ENCODE measurements at regions of chr19 and their contacts with region 1.

Region 1: GRCh38 chr19:4065430-4066175 is 1.1 kb downstream of the ZBTB7A start:
- DNase-seq: peak; percentile 93 to 99 (median 98)
- ATAC-seq: peak; percentile 60 to 76
- H3K4me3 Mint-ChIP-seq: peak overlapping the region; percentile 50 to 88 (median 67)
- H3K27ac Mint-ChIP-seq: peak overlapping the region in 7 of 10 donors; percentile 32 to 81 (median 65)
- H3K4me1 Mint-ChIP-seq: peaks cover 7 to 53% (median 42%) of the 10 kb centered on the region in 4 donors
- H3K27me3 Mint-ChIP-seq: no peaks in the 10 kb centered on the region

Region 2: DNA sequence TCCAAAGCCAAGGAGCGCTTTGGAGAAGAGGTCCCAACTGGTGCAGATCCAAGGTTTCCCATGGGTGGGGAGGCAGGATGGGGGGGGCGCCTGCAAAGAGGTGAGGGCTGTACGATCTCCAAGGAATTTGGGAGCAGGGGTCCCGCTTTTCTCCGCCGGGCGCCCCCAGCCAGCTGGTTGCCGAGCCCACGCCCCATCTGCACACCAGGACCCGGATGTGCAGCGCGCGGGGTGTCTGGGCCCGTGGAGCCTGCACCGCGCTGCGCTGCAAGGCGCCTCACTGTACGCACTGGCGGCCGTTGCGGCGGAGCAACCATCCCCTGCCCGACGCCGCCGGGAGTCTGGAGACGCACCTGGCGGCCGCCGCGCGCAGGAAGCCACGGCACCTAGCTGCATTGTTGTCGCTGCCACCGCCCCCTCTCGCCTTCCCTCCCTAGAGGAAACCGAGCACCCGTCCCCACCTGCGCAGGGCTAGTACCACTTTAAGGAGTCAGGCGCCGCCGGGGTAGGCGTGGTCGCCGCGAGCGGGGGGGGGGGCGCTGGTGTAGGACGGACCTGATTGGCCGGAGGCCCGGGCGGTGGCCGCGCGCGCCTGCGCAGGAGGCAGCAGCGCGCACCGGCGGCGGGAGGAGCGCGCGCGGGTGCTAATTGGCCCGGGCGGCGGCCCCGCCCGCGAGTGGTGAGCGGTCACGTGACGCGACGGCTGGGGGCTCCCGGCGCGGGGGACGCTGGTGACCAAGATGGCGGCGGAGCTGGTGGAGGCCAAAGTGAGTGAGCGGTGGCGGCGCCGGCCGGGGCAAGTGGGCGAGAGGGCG is 58.4 kb before region 1 on chr19 and contains the start of gene PIAS4:
- POLR2A ChIA-PET with region 1: interaction called, 26 read pairs
- DNase-seq: peak; percentile 88 to 99 (median 94)
- ATAC-seq: peak; percentile 90 to 91
- H3K4me3 Mint-ChIP-seq: peak within 1 kb of the TSS; percentile 79 to 93 (median 87)
- H3K27ac Mint-ChIP-seq: peak within 1 kb of the TSS; percentile 71 to 91 (median 85)
- H3K4me1 Mint-ChIP-seq: peaks cover 11 to 39% (median 29%) of the 10 kb centered on the region in 4 donors
- H3K27me3 Mint-ChIP-seq: no peaks in the 10 kb centered on the region
- polyA plus RNA-seq, gene PIAS4: 3.2 to 4.9 (median 4.5) TPM

Region 3: GRCh38 chr19:4019578-4019977 is 46.0 kb before region 1 on chr19:
- POLR2A ChIA-PET with region 1: no interaction called
- DNase-seq: no peak
- ATAC-seq: no peak
- H3K4me3 Mint-ChIP-seq: no peak overlapping the region
- H3K27ac Mint-ChIP-seq: no peak overlapping the region
- H3K4me1 Mint-ChIP-seq: peaks cover 4 to 28% (median 9%) of the 10 kb centered on the region in 4 donors
- H3K27me3 Mint-ChIP-seq: no peaks in the 10 kb centered on the region

Region 4: DNA sequence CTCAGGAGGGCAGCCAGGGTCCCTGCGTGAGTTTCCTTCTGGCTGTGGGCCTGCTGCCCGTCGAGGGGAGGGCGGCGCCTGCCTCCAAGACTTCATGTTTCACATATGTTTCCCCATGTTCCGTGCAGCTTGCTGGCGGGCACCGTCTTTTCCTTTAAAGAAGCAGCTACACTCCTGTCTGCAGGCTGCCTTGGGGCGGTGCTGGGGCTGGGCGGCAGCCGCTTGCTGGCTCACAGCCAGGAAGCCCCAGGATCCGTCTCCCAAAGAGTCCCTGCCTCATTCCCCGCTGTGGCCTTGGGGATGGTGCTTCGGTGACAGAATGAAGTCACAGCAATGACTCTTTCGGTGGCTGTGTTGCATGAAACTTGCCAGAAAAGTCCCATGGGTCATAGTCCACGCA is 33.2 kb before region 1 on chr19:
- POLR2A ChIA-PET with region 1: no interaction called
- DNase-seq: no peak
- ATAC-seq: no peak
- H3K4me3 Mint-ChIP-seq: no peak overlapping the region
- H3K27ac Mint-ChIP-seq: no peak overlapping the region
- H3K4me1 Mint-ChIP-seq: no peaks in the 10 kb centered on the region
- H3K27me3 Mint-ChIP-seq: no peaks in the 10 kb centered on the region

Region 5: DNA sequence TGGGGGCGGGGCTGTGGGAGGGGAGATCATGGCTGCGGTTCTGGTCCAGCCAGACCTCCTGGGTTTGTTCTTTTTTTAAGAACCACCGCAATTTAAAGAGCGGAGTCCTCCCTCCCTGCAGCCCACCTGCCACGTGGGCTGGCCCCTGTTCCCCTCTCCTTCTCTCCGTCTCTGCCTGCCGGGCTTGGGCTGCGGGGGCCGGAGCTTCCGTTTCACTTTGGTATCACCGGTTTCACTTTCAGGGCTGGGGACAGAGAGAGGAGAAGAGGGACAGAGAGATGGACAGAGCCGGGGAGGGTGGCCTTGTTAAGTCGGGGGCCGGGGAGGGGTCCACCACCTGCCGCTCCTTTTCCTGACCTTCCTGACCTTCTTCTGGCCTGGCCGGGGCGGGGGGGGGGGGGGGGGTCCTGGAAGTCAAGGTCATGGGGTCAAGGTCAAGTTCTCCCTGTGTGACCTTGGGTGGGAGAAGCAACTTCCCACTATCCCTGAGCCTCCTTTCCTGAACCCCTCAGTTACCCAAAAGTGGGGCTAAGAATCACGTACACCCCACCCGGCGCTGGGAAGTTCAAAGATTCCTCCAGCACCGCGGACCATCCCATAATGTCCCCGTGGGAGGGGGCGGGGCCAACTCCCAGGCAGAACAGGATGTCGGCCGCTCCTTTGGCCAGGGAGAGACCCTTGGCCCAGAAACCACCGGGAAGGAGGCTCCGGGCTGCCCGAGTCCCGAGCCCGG is 12.4 kb after region 1 on chr19:
- POLR2A ChIA-PET with region 1: interaction called, 31 read pairs
- DNase-seq: peak in 6 of 10 donors; percentile 34 to 73 (median 46)
- ATAC-seq: peak; percentile 74 to 91
- H3K4me3 Mint-ChIP-seq: peak overlapping the region; percentile 74 to 92 (median 87)
- H3K27ac Mint-ChIP-seq: peak overlapping the region; percentile 81 to 94 (median 90)
- H3K4me1 Mint-ChIP-seq: peaks cover 5 to 41% (median 34%) of the 10 kb centered on the region in 4 donors
- H3K27me3 Mint-ChIP-seq: no peaks in the 10 kb centered on the region

Region 6: DNA sequence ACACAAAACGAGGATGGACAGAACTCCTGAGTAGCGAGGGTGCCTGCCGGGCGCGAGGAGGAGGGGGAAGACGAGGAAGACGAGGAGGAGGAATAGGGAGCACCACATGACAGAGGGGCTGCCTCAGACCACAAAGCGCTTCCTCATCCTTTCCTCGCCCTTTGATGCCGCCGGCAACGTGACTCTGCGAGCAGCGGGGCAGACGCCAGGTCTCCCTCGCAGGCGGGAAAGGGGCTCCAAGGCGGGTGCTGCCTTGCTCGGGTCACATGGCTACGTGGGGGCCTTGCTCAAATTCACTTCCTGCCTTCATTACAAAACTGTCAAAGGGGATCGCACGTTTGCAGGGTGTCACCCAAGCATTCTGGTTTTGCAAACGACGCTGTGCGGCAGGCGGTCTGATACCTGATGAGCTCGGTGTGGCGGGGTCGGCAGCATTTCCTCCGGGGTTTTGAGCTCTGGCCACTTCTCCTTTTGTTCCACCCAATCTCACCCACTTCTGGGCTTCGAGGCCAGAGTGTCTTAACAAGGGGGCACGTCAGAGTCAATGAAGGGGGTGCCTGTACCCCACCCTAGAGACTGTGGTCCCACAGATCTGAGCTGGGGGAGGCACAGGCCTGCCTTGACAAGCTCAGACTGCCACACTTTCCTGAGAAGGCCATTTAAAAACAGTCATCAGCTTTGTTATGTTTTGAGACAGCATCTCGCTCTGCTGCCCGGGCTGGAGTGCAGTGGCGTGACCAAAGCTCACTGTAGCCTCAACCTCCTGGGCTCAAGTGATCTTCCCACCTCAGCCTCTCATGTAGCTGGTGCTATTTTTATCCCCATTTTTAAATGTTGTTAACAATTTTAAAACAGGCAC is 43.4 kb after region 1 on chr19:
- POLR2A ChIA-PET with region 1: interaction called, 74 read pairs
- DNase-seq: peak; percentile 63 to 92 (median 84)
- ATAC-seq: peak; percentile 61 to 68
- H3K4me3 Mint-ChIP-seq: peak overlapping the region; percentile 46 to 83 (median 70)
- H3K27ac Mint-ChIP-seq: peak overlapping the region; percentile 90 to 98 (median 96)
- H3K4me1 Mint-ChIP-seq: peaks cover 32 to 82% (median 72%) of the 10 kb centered on the region in 4 donors
- H3K27me3 Mint-ChIP-seq: no peaks in the 10 kb centered on the region

Region 7: GRCh38 chr19:4139614-4140236 is 74.1 kb after region 1 on chr19:
- POLR2A ChIA-PET with region 1: interaction called, 10 read pairs
- DNase-seq: peak; percentile 69 to 91 (median 83)
- ATAC-seq: peak; percentile 91 to 95
- H3K4me3 Mint-ChIP-seq: peak overlapping the region in 7 of 10 donors; percentile 4 to 43 (median 20)
- H3K27ac Mint-ChIP-seq: peak overlapping the region in 6 of 10 donors; percentile 6 to 71 (median 32)
- H3K4me1 Mint-ChIP-seq: peaks cover 6 to 15% (median 12%) of the 10 kb centered on the region in 4 donors
- H3K27me3 Mint-ChIP-seq: peaks cover 0 to 6% (median 3%) of the 10 kb centered on the region in 5 donors

Region 8: GRCh38 chr19:4152241-4152998 is 86.8 kb after region 1 on chr19:
- POLR2A ChIA-PET with region 1: no interaction called
- DNase-seq: no peak
- ATAC-seq: no peak
- H3K4me3 Mint-ChIP-seq: no peak overlapping the region
- H3K27ac Mint-ChIP-seq: no peak overlapping the region
- H3K4me1 Mint-ChIP-seq: peaks cover 0 to 2% (median under 1%) of the 10 kb centered on the region in 4 donors
- H3K27me3 Mint-ChIP-seq: peaks cover 0 to 11% (median 4%) of the 10 kb centered on the region in 5 donors